ENCODE measurements at regions of chr19 and their contacts with region 1.

Region 1: DNA sequence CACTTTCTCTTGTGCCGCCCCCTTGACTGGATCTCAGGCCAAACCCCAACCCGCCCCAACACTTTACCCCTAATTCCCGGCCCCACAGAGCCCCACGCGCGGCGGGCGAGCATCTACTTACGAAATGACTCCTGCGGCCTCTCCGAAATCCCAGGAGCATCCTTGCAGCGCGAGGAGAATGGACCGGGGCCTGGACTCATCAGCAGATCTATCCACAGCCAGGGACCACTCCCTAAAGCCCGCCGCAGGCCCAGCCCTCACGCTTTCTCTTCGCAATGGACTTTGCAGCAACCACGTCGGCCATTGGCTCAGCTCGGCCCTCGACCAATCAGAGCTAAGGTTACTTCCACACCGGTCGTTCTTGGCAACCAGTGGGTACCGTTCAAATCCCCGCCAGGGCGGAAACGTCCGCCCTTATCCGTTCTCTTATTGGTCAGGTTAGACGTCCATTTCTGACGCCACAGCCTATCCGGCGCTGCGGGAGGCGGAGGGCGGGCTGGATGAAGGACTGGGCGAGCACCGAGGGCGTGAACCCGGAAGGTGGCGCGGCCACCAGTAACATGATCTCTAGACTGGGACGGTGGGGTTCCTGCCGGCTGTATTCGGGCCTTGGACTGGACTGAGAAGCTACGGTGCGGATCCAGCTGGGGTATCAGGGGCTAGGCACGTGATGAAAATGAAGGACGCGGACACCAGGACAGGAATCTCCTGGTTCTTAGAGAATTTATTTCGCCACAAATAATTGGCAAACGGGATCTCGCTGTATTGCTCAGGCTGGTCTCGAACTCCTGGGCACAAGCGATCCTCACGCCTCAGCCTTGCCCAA is at the starts of genes CEP89 and FAAP24:
- DNase-seq: peak; percentile 95
- ATAC-seq: peak; percentile 100
- H3K4me3 Mint-ChIP-seq: peak within 1 kb of the TSS; percentile 99
- H3K27ac Mint-ChIP-seq: peak within 1 kb of the TSS; percentile 83
- H3K4me1 Mint-ChIP-seq: peaks cover 4% of the 10 kb centered on the region
- H3K27me3 Mint-ChIP-seq: no peaks in the 10 kb centered on the region
- total RNA-seq, gene CEP89: 21.0 to 27.2 TPM
- total RNA-seq, gene FAAP24: 6.3 to 7.0 TPM

Region 2: GRCh38 chr19:32691291-32691951 is 280.5 kb before region 1 on chr19 and contains the start of gene NUDT19:
- POLR2A ChIA-PET with region 1: interaction called, 10 read pairs
- DNase-seq: peak; percentile 83
- ATAC-seq: peak; percentile 80
- H3K4me3 Mint-ChIP-seq: peak within 1 kb of the TSS; percentile 87
- H3K27ac Mint-ChIP-seq: peak within 1 kb of the TSS; percentile 91
- H3K4me1 Mint-ChIP-seq: peaks cover 40% of the 10 kb centered on the region
- H3K27me3 Mint-ChIP-seq: no peaks in the 10 kb centered on the region
- total RNA-seq, gene NUDT19: 15.2 to 15.4 TPM

Region 3: GRCh38 chr19:32928806-32929205 is 43.1 kb before region 1 on chr19:
- POLR2A ChIA-PET with region 1: no interaction called
- DNase-seq: no peak
- ATAC-seq: no peak
- H3K4me3 Mint-ChIP-seq: no peak overlapping the region
- H3K27ac Mint-ChIP-seq: no peak overlapping the region
- H3K4me1 Mint-ChIP-seq: no peaks in the 10 kb centered on the region
- H3K27me3 Mint-ChIP-seq: no peaks in the 10 kb centered on the region